ENCODE measurements at regions of chr17 and their contacts with region 1.

Region 1: GRCh38 chr17:47970704-47971463 is at the start of gene CDK5RAP3:
- DNase-seq: peak; percentile 100
- ATAC-seq: peak; percentile 100
- H3K4me3 Mint-ChIP-seq: peak within 1 kb of the TSS; percentile 95
- H3K27ac Mint-ChIP-seq: peak within 1 kb of the TSS; percentile 91
- H3K4me1 Mint-ChIP-seq: peaks cover 22% of the 10 kb centered on the region
- H3K27me3 Mint-ChIP-seq: no peaks in the 10 kb centered on the region
- CTCF ChIP-seq: peak; percentile 97
- total RNA-seq, gene CDK5RAP3: 161 to 171 TPM

Region 2: DNA sequence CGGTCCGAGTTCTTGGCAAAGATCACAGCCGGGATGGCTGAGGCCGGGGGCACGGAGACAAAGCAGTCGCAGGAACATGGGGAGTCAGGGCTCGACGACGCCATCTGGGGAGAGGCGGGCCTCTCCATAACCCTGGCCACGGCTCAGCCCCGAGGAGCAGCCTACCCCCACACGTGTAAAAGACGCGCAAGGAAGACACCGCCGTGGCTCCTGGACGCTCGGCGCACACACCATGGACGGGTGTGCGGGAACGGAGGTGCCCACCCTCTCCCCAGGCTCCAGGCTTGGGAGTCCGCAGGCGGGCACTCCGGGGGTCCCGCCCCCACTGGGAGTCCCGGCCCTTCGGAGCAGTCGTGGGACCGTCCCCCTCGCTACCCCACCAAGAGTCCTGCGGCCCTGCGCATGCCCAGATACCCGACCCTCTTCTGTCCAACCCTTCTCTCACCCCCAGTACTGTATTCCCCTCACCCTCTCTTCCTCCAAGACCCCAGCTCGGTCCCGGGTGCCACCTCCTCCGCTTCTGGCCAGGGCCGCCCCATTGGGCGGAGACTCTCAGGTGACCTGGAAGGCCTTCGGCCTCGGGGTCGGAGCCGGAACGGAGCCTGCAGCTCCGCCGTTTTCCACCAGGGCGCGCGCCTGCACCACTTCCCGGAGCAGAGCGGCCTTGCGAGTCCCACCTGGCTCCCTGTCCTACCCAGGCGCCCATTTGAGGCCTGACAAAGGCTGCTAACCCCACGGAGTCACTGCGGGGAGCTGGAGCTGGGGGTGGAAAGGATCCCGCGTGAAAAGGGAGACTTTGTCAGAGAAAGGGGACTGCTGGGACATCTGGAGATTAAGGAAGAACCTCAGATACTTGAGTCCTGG is 129.9 kb before region 1 on chr17 and contains the start of gene SCRN2:
- CTCF ChIA-PET with region 1: interaction called, 23 read pairs
- POLR2A ChIA-PET with region 1: interaction called, 3 read pairs
- intact Hi-C with region 1: no loop called
- DNase-seq: peak; percentile 92
- ATAC-seq: peak; percentile 96
- H3K4me3 Mint-ChIP-seq: peak within 1 kb of the TSS; percentile 92
- H3K27ac Mint-ChIP-seq: peak within 1 kb of the TSS; percentile 91
- H3K4me1 Mint-ChIP-seq: peaks cover 27% of the 10 kb centered on the region
- H3K27me3 Mint-ChIP-seq: peaks cover 16% of the 10 kb centered on the region
- CTCF ChIP-seq: peak; percentile 99
- total RNA-seq, gene SCRN2: 21.0 to 23.8 TPM

Region 3: DNA sequence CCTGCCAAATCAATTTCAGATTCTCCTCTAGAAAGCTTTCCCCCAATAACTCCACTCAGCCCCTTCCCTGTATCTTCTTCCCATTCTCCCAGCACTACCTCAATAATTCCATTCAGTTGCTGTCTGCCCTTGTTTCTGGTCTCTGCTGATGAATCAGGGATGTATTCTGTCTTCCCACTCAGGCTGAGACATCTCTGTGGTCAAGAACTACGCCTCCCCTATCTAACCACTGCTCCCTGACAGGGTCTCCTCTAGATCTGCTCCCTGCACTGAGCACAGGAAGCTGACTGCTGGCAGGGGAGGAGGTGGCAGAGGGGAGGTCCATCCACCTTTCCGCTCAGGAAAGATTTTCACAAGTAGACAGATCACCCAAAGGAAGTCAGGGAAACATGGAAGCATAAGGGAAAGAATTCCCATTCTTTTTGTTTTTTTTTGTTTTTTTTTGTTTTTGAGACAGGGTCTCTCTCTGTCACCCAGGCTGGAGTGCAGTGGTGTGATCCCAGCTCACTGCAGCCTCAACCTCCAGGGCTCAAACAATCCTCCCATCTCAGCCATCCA is 91.8 kb before region 1 on chr17:
- CTCF ChIA-PET with region 1: no interaction called
- POLR2A ChIA-PET with region 1: no interaction called
- intact Hi-C with region 1: no loop called
- DNase-seq: peak; percentile 17
- ATAC-seq: peak; percentile 65
- H3K4me3 Mint-ChIP-seq: no peak overlapping the region
- H3K27ac Mint-ChIP-seq: no peak overlapping the region
- H3K4me1 Mint-ChIP-seq: peaks cover 12% of the 10 kb centered on the region
- H3K27me3 Mint-ChIP-seq: peaks cover 17% of the 10 kb centered on the region
- CTCF ChIP-seq: no peak

Region 4: DNA sequence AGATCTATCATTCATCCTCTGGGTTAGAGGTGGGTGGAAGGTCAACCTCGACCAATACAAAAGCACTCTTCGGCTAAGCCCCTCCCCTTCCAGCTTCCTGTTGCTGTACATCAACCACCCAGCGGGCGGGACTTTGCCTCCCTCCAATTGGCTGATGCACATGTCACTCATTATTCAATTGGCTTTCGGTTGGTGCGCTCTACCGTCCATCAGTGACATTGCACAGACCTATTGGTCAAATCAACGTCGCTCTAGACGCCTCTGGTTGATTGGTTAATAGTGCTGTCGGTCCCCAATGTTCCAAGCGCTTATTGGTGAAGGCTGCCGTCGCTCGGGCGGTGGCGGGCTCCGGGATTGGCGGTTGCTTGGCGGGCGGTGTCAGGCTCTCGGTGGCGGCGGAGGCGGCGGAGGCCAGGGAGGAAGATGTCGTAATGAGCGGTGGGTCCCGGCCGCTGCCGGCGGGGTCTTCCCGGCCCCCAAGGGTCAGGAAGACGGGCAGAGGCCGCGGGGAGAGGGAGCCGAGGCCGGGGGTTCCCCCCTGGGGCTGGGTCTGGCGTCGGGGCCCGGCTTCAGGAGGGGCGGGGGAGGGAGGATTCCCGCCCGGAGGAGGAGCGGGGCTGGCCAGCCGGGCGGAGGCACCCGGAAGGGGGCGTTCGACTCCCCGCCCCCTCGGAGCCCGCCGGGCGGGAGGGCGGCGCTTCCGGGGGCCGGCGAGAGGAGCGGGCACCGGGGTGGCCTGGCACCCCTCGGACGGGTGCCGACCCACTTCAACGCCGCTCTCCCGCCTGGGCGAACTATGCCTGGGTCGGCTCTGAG is 74.8 kb before region 1 on chr17 and contains the start of gene SP2:
- CTCF ChIA-PET with region 1: interaction called, 20 read pairs
- POLR2A ChIA-PET with region 1: interaction called, 12 read pairs
- intact Hi-C with region 1: no loop called
- DNase-seq: peak; percentile 100
- ATAC-seq: peak; percentile 91
- H3K4me3 Mint-ChIP-seq: peak within 1 kb of the TSS; percentile 95
- H3K27ac Mint-ChIP-seq: peak within 1 kb of the TSS; percentile 96
- H3K4me1 Mint-ChIP-seq: peaks cover 46% of the 10 kb centered on the region
- H3K27me3 Mint-ChIP-seq: no peaks in the 10 kb centered on the region
- CTCF ChIP-seq: no peak
- total RNA-seq, gene SP2: 11.5 to 13.2 TPM

Region 5: DNA sequence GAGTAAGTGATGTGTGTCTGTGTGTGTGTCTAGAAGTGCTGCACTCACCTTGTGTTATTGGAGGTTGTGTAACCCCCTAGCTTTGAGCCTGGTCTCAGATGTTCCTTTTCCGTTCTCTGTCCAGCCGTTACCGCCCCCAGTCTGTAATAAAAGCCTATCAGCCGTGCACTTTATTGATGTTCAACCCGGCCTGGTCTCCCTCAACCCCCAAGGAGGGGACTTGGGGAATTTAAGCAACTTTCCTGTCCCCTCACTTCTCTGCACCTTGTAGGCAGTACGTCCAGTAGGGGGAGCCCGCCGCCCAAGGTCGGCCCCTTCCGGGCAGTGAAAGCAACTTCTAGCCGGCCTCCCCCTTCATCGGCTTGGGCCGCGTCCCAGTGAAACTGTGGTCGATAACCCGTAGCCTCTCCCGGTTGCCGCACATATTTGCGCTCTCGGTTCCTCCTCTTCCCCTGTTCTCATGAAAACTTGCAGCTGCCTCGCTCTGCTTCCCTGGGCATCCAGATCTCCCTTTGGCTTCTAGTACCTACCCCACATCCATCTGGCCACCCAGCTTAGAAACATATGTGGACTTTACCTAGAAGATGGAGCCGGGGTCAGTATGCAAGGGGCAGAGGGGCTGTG is 21.6 kb before region 1 on chr17:
- CTCF ChIA-PET with region 1: interaction called, 284 read pairs
- POLR2A ChIA-PET with region 1: interaction called, 35 read pairs
- intact Hi-C with region 1: no loop called
- DNase-seq: peak; percentile 89
- ATAC-seq: peak; percentile 64
- H3K4me3 Mint-ChIP-seq: peak overlapping the region; percentile 47
- H3K27ac Mint-ChIP-seq: peak overlapping the region; percentile 78
- H3K4me1 Mint-ChIP-seq: peaks cover 50% of the 10 kb centered on the region
- H3K27me3 Mint-ChIP-seq: no peaks in the 10 kb centered on the region
- CTCF ChIP-seq: peak; percentile 95

Region 6: GRCh38 chr17:47987240-47987835 is 16.5 kb after region 1 on chr17:
- CTCF ChIA-PET with region 1: interaction called, 19 read pairs
- POLR2A ChIA-PET with region 1: interaction called, 4 read pairs
- intact Hi-C with region 1: no loop called
- DNase-seq: no peak
- ATAC-seq: no peak
- H3K4me3 Mint-ChIP-seq: no peak overlapping the region
- H3K27ac Mint-ChIP-seq: no peak overlapping the region
- H3K4me1 Mint-ChIP-seq: no peaks in the 10 kb centered on the region
- H3K27me3 Mint-ChIP-seq: no peaks in the 10 kb centered on the region
- CTCF ChIP-seq: no peak

Measured in activated CD8-positive, alpha-beta T cell treated with anti-CD3 and anti-CD28 coated beads for 36 hours (primary cell).